Activated naive CD4-positive, alpha-beta T cell treated with anti-CD3 and anti-CD28 coated beads for 36 hours (primary cell): ENCODE measurements at regions of chr5 and their contacts with region 1.

Region 1: DNA sequence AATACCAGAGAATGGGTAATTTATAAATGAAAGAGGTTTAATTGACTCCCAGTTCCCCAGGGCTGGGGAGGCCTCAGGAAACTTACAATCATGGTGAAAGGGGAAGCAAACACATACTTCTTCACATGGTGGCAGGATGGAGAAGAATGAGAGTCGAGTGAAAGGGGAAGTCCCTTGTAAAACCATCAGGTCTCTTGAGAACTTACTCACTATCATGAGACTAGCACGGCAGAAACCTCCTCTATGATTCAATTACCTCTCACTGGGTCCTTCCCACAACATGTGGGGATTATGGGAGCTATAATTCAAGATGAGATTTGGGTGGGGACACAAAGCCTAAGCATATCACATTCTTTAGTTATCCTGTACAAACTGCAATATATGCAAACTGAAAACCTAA is 609.4 kb downstream of the MTRR start:
- DNase-seq: no peak
- H3K4me3 Mint-ChIP-seq: no peak overlapping the region
- H3K27ac Mint-ChIP-seq: no peak overlapping the region
- H3K4me1 Mint-ChIP-seq: no peaks in the 10 kb centered on the region
- H3K27me3 Mint-ChIP-seq: no peaks in the 10 kb centered on the region

Region 2: GRCh38 chr5:8445870-8446578 is 32.3 kb before region 1 on chr5:
- CTCF ChIA-PET with region 1: no interaction called
- intact Hi-C with region 1: loop called (anchors 1 kb)
- DNase-seq: no peak
- H3K4me3 Mint-ChIP-seq: no peak overlapping the region
- H3K27ac Mint-ChIP-seq: no peak overlapping the region
- H3K4me1 Mint-ChIP-seq: no peaks in the 10 kb centered on the region
- H3K27me3 Mint-ChIP-seq: no peaks in the 10 kb centered on the region

Region 3: GRCh38 chr5:8897316-8897715 is 419.0 kb after region 1 on chr5:
- CTCF ChIA-PET with region 1: no interaction called
- intact Hi-C with region 1: no loop called
- DNase-seq: no peak
- H3K4me3 Mint-ChIP-seq: no peak overlapping the region
- H3K27ac Mint-ChIP-seq: no peak overlapping the region
- H3K4me1 Mint-ChIP-seq: no peaks in the 10 kb centered on the region
- H3K27me3 Mint-ChIP-seq: no peaks in the 10 kb centered on the region